Right ventricle myocardium inferior (tissue), 1 donor: ENCODE measurements at regions of chr11 and their contacts with region 1.

Region 1: DNA sequence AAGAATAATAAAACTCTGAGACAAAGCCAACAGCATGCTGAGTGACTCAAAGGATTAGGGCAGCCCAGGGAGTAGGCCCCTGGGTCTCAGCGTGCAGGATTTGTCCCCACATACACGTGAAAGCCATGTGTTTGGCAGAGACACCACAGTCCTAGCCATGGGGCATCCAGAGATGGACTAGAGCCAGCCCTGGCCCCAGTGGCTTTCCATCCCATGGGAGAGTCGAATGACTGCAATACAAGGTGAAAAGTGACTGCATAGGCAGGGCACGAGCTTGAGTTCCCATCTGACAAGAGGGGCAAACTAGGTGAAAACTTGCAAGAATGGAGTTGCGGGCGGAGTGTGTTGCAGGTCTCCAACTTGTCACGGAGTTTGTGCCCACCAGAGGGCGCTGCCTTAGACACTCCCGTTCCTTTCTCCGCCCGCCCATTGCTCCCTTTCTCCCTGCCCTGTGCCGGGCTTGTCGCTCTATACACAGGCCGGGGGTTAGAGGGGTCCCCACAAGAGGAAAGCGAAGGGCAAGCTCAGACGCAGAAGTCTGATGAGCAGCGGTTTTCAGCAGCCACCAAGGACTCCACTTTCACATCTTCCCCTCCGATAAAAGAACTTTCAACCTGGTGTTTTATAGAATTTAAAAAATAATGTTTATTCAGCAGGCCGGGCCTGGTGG is 24.2 kb downstream of the TSKU start:
- DNase-seq: peak; percentile 93
- ATAC-seq: peak; percentile 82

Region 2: DNA sequence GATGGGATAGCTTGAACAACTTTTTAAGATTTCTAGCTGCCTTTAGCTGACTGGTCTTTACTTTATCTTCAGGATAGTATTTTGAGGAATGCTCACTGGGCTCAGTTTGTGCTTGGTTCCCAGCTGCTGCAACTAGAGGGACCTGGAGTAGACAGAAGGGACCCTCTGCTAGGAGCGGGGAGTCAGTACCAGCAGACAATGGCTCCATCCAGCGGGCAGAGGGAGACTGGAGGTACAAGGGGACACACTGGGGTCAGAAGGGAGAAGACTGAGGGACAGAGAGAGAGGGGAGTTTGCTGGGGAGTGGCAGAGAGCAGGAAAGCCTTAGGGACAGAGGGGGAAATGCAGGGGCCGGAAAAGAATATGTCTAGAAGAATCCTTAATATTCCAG is 31.3 kb after region 1 on chr11:
- intact Hi-C with region 1: loop called (anchors 2 kb)
- DNase-seq: no peak
- ATAC-seq: peak; percentile 63

Region 3: GRCh38 chr11:77091146-77091940 is 284.0 kb after region 1 on chr11:
- intact Hi-C with region 1: loop called (anchors 10 kb)
- DNase-seq: no peak
- ATAC-seq: peak; percentile 77